ENCODE measurements at regions of chr19 and their contacts with region 1.

Region 1: GRCh38 chr19:8355631-8356402 is 8.1 kb upstream of the ANGPTL4 start:
- DNase-seq: no peak
- H3K4me3 Mint-ChIP-seq: no peak overlapping the region
- H3K27ac Mint-ChIP-seq: no peak overlapping the region
- H3K4me1 Mint-ChIP-seq: no peaks in the 10 kb centered on the region
- H3K27me3 Mint-ChIP-seq: peaks cover 10% of the 10 kb centered on the region

Region 2: GRCh38 chr19:8325454-8325853 is 30.4 kb before region 1 on chr19:
- CTCF ChIA-PET with region 1: no interaction called
- intact Hi-C with region 1: no loop called
- DNase-seq: no peak
- H3K4me3 Mint-ChIP-seq: no peak overlapping the region
- H3K27ac Mint-ChIP-seq: no peak overlapping the region
- H3K4me1 Mint-ChIP-seq: peaks cover 16% of the 10 kb centered on the region
- H3K27me3 Mint-ChIP-seq: no peaks in the 10 kb centered on the region

Region 3: GRCh38 chr19:8342684-8343482 is 12.9 kb before region 1 on chr19 and contains the start of gene KANK3:
- CTCF ChIA-PET with region 1: interaction called, 18 read pairs
- intact Hi-C with region 1: no loop called
- DNase-seq: peak; percentile 96
- H3K4me3 Mint-ChIP-seq: peak within 1 kb of the TSS; percentile 73
- H3K27ac Mint-ChIP-seq: no peak within 1 kb of the TSS
- H3K4me1 Mint-ChIP-seq: peaks cover 4% of the 10 kb centered on the region
- H3K27me3 Mint-ChIP-seq: peaks cover 7% of the 10 kb centered on the region
- total RNA-seq, gene KANK3: 0.17 to 0.36 TPM

Region 4: GRCh38 chr19:8389891-8390616 is 34.2 kb after region 1 on chr19 and contains the start of gene RAB11B:
- CTCF ChIA-PET with region 1: interaction called, 41 read pairs
- intact Hi-C with region 1: no loop called
- DNase-seq: peak; percentile 100
- H3K4me3 Mint-ChIP-seq: peak within 1 kb of the TSS; percentile 93
- H3K27ac Mint-ChIP-seq: peak within 1 kb of the TSS; percentile 96
- H3K4me1 Mint-ChIP-seq: peaks cover 25% of the 10 kb centered on the region
- H3K27me3 Mint-ChIP-seq: no peaks in the 10 kb centered on the region
- total RNA-seq, gene RAB11B: 61.9 to 69.6 TPM

Region 5: DNA sequence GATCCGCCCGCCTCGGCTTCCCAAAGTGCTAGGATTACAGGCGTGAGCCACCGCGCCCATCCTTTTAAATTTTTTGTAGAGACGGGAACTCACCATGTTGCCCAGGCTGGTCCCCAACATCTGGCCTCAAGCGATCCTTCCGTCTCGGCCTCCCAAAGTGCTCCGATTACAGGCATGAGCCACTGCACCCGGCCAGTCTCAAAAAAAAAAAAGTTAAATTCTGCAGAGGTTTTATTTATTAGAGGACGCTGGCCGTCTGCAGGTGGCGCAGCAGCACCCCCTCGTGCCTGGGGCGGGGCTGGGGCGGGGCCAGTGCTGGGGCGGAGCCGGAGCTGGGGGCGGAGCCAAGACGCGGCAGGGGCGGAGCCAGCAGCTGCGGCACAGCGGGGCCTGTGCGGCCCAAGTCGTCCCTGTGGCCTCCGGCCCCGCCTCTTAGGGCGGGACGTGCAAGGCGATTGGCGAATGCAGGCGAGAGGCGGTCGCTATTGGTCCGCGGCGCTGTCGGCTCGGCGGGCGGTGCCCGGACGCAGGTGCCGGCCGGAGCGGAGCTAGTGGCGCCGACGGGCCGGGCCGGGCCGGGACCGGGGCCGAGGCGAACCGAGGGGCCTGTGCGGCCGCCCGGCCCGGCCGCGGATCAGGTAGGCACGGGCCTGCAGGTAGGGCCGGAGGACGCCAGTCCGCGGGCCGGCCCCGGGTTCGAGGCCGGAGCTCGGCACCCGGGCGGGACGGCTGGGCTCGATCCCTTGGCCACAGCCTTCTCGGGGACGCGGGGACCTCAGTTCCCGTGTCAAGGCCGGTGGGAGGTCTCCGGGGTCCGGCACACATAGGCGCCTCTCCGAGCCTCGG is 57.2 kb after region 1 on chr19 and contains the start of gene MARCHF2:
- CTCF ChIA-PET with region 1: interaction called, 5 read pairs
- intact Hi-C with region 1: loop called (anchors 2 kb)
- DNase-seq: peak; percentile 95
- H3K4me3 Mint-ChIP-seq: peak within 1 kb of the TSS; percentile 56
- H3K27ac Mint-ChIP-seq: no peak within 1 kb of the TSS
- H3K4me1 Mint-ChIP-seq: peaks cover 5% of the 10 kb centered on the region
- H3K27me3 Mint-ChIP-seq: no peaks in the 10 kb centered on the region
- total RNA-seq, gene MARCHF2: 9.2 to 10.3 TPM

Region 6: GRCh38 chr19:8505680-8506401 is 150.0 kb after region 1 on chr19:
- CTCF ChIA-PET with region 1: interaction called, 13 read pairs
- intact Hi-C with region 1: loop called (anchors 1 kb)
- DNase-seq: peak; percentile 81
- H3K4me3 Mint-ChIP-seq: peak overlapping the region; percentile 84
- H3K27ac Mint-ChIP-seq: peak overlapping the region; percentile 63
- H3K4me1 Mint-ChIP-seq: peaks cover 8% of the 10 kb centered on the region
- H3K27me3 Mint-ChIP-seq: no peaks in the 10 kb centered on the region

Region 7: DNA sequence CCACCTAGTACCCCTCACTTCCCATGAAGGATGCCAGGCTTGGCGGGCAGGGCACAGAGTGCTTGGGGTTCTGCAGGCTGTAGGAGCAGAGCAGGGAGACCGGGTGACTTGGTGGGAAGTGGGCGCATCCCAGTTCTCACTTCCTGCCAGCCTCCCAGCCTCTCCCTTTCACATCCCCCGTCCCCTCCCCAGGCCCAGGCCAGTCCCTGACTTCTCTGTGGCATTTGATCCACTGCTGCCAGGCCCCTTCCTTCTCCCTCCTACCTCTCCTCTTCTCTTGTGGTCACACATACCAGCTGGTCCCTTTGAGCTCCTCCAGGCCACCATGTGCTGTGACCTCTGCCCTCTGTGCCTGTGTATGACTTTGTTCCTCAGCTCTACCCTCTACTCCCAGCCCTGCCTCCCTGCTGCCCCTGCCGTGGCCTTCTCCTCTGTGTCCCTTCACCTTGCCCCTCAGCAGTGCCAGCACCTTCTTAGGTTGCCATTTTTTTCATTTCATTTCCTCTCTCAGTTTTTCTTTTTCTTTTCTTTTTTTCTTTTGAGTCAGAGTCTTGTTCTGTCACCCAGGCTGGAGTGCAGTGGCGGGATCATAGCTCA is 201.9 kb after region 1 on chr19:
- CTCF ChIA-PET with region 1: no interaction called
- intact Hi-C with region 1: no loop called
- DNase-seq: no peak
- H3K4me3 Mint-ChIP-seq: no peak overlapping the region
- H3K27ac Mint-ChIP-seq: peak overlapping the region; percentile 71
- H3K4me1 Mint-ChIP-seq: peaks cover 11% of the 10 kb centered on the region
- H3K27me3 Mint-ChIP-seq: no peaks in the 10 kb centered on the region

Region 8: GRCh38 chr19:9189538-9189937 is 833.7 kb after region 1 on chr19:
- CTCF ChIA-PET with region 1: no interaction called
- intact Hi-C with region 1: no loop called
- DNase-seq: no peak
- H3K4me3 Mint-ChIP-seq: no peak overlapping the region
- H3K27ac Mint-ChIP-seq: no peak overlapping the region
- H3K4me1 Mint-ChIP-seq: no peaks in the 10 kb centered on the region
- H3K27me3 Mint-ChIP-seq: peaks cover 15% of the 10 kb centered on the region

Measured in activated naive CD4-positive, alpha-beta T cell treated with anti-CD3 and anti-CD28 coated beads for 36 hours (primary cell).